Heart right ventricle (tissue), 16 donors: ENCODE measurements at regions of chr10 and their contacts with region 1.

Region 1: DNA sequence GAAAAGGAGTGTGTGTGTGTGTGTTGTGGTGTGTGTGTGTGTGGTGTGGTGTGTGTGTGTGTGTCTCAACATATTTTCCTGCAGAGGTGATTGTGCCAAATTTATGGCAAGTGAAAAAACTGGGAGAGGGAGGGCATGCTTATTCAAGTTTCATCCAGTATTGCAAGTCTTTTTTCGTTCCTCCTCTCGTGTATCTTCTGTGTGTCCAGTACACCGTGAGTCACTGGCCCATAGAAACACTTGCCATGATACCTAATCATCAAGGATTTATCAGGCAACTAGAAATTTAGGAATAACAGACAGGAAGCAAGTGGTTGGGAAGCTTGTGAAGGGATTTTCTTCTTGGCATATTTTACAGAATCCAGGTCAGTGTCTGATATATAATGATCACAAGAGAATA is 820.5 kb downstream of the GATA3 start:
- DNase-seq: no peak
- ATAC-seq: no peak
- H3K4me3 ChIP-seq: no peak overlapping the region
- H3K27ac ChIP-seq: no peak overlapping the region
- H3K4me1 ChIP-seq: no peaks in the 10 kb centered on the region
- H3K27me3 ChIP-seq: peaks cover 0 to 16% (median 0%) of the 10 kb centered on the region in 7 donors
- CTCF ChIP-seq: no peak

Region 2: GRCh38 chr10:8543361-8544069 is 331.5 kb before region 1 on chr10:
- intact Hi-C with region 1: loop called in 1 of 10 experiments (anchors 5 kb)
- DNase-seq: no peak
- ATAC-seq: no peak
- H3K4me3 ChIP-seq: no peak overlapping the region
- H3K27ac ChIP-seq: no peak overlapping the region
- H3K4me1 ChIP-seq: no peaks in the 10 kb centered on the region
- H3K27me3 ChIP-seq: no peaks in the 10 kb centered on the region
- CTCF ChIP-seq: no peak

Region 3: GRCh38 chr10:8898745-8899325 is 23.9 kb after region 1 on chr10:
- intact Hi-C with region 1: no loop called
- DNase-seq: no peak
- ATAC-seq: no peak
- H3K4me3 ChIP-seq: no peak overlapping the region
- H3K27ac ChIP-seq: no peak overlapping the region
- H3K4me1 ChIP-seq: no peaks in the 10 kb centered on the region
- H3K27me3 ChIP-seq: peaks cover 0 to 6% (median 0%) of the 10 kb centered on the region in 7 donors
- CTCF ChIP-seq: no peak

Region 4: DNA sequence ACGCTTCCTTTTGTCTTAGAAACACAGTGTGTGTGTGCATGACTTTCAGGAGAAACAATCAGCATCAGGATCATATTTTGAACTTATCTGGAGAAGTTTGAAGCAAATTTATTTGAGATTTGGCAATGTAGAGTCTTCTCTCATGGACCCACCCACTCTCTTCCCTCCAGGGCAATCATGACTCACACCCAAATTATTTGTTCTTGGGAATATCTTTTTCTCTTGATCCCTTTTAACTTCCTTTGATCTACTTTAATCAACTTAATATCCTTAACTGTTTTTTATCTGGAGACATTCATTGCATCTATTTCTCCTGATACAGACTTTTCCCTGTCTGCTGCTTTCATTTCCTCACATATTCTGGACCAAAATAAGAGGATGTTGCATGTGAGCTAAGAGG is 353.8 kb after region 1 on chr10:
- intact Hi-C with region 1: no loop called
- DNase-seq: no peak
- ATAC-seq: no peak
- H3K4me3 ChIP-seq: no peak overlapping the region
- H3K27ac ChIP-seq: no peak overlapping the region
- H3K4me1 ChIP-seq: no peaks in the 10 kb centered on the region
- H3K27me3 ChIP-seq: peaks cover 0 to 41% (median 9%) of the 10 kb centered on the region in 7 donors
- CTCF ChIP-seq: no peak